ENCODE measurements at regions of chr3 and their contacts with region 1.

Region 1: GRCh38 chr3:169623948-169624347 is 39.6 kb downstream of the MECOM start:
- DNase-seq: no peak
- H3K4me3 ChIP-seq: no peak overlapping the region
- H3K27ac ChIP-seq: no peak overlapping the region
- H3K4me1 ChIP-seq: no peaks in the 10 kb centered on the region
- H3K27me3 ChIP-seq: no peaks in the 10 kb centered on the region
- CTCF ChIP-seq: no peak
- EP300 ChIP-seq: no peak
- POLR2A ChIP-seq: no peak

Region 2: GRCh38 chr3:169362301-169362700 is 261.6 kb before region 1 on chr3:
- in situ Hi-C with region 1: no loop called
- intact Hi-C with region 1: no loop called
- DNase-seq: peak; percentile 55
- H3K4me3 ChIP-seq: no peak overlapping the region
- H3K27ac ChIP-seq: no peak overlapping the region
- H3K4me1 ChIP-seq: peaks cover 0 to 18% (median 7%) of the 10 kb centered on the region in 4 donors
- H3K27me3 ChIP-seq: no peaks in the 10 kb centered on the region
- CTCF ChIP-seq: no peak
- EP300 ChIP-seq: no peak
- POLR2A ChIP-seq: no peak

Region 3: DNA sequence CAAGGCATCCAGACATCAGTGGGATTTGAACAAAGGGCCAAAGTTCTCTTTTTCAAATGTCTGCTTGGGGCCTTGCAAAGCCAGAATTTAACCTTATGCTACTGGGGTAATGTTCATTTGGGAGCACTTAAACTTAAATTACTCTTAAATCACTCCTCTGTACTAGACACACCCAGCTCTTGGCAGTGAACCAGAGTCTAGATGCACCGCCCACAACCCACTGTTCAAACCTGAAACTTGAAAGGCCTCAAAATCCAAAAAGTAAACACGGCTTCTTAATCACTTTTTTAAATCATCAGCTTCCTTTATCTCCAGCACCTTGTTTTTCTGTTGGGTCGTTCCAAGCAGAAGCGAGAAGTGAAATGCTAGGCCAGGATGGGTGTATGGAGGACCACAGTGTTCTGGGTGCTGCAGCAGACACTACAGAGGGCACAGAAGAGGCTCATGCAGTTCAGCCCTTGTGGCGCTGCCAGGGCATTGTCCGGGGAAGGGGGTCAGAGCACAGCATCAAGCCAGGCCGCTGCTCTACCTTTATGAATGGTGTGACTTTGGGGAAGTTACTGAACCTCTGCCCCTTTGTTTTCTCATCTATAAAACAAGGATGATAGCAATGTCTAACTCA is 10.8 kb after region 1 on chr3:
- in situ Hi-C with region 1: no loop called
- intact Hi-C with region 1: loop called (anchors 1 kb)
- DNase-seq: peak; percentile 84
- H3K4me3 ChIP-seq: no peak overlapping the region
- H3K27ac ChIP-seq: peak overlapping the region in 3 of 4 donors; percentile 50 to 68 (median 52)
- H3K4me1 ChIP-seq: peaks cover 0 to 35% (median 8%) of the 10 kb centered on the region in 4 donors
- H3K27me3 ChIP-seq: no peaks in the 10 kb centered on the region
- CTCF ChIP-seq: no peak
- EP300 ChIP-seq: no peak
- POLR2A ChIP-seq: no peak

Measured in transverse colon (tissue), 4 donors.